ENCODE measurements at regions of chr15 and their contacts with region 1.

Region 1: DNA sequence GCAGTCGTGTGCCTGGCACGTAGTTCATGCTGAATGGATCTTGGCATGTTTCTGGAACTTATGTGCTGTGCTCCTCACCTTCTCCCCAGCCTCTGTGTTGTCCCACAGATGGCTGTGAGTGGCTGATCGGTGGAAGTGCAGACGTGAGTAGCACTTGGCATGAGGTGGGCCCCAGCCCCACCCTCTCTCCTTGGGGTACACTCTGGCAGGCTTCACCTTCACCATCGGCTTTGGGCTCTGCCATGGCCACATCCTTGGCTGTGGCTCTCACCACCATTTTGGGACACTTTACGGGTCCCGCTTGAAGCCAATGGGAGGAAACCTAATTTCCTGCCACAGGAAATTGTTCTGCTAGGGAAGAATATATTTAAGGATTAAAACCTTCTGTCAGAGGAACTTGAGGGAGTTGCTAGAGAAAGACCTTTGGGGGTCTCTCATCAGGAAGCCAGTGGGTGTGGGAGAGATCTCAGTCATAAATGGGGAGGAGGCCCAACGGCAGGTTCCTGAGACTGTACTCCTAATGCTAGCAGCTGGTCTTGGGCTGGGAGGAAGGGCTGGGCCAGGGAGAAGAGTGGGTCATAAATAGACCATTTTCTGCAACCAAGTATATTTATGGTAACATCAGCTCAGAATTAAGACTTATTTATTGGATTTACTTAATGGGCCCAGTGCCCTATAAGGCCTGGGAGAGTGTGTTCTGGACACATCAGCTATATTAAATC is 92.3 kb downstream of the SMAD3 start:
- DNase-seq: peak in 1 of 5 donors; percentile 18
- H3K4me3 ChIP-seq: no peak overlapping the region
- H3K27ac ChIP-seq: no peak overlapping the region
- H3K4me1 ChIP-seq: peaks cover 11% of the 10 kb centered on the region
- H3K27me3 ChIP-seq: no peaks in the 10 kb centered on the region
- CTCF ChIP-seq: no peak
- EP300 ChIP-seq: no peak
- POLR2A ChIP-seq: no peak

Region 2: DNA sequence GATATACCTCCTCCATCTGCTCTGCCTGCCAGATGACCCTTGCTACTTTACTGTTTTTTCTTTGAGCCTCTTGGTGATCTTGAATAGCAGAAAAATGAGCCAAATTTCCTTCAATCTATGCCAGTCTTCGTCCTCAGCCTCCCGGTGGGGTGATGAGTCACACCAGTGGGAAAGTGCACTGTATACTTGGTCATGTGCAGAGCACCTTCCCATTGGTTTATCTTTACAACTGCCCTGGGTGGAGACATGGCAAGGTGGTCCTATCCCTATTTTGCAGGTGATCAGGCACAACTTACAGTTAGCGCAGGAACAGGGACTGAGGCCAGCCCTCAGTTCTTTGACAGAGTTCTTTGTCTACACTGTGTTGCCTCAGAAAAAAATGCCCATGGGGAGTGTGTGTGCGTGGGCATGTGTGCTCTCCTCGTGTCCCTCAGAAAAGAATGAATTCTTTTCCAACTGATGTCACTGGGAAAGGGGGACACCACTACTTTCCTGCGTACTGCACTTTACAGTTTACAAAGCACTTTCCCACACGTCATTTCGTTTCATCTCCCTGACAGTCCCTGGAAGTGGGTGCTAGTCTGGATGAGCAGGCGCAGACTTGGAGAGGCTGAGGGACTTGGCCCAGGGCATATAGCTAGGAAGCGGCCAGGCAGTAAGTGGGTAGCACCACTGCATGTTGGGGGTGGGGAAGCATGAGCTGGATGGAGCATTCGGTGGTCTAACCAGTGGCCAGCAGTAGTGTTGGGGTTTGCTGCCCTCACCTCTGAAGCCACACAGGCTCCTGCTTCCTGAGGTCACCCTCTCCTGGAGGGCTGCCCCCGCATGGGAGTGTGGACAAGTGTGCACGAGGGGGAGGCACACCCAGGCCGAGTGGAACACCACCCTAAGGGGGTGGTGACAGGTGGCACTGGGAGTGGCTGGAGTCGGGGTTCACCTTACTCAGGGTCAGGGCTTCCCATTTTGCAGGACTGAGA is 68.2 kb before region 1 on chr15:
- intact Hi-C with region 1: loop called in 1 of 4 experiments (anchors 2 kb)
- DNase-seq: no peak
- H3K4me3 ChIP-seq: no peak overlapping the region
- H3K27ac ChIP-seq: no peak overlapping the region
- H3K4me1 ChIP-seq: peaks cover 49% of the 10 kb centered on the region
- H3K27me3 ChIP-seq: no peaks in the 10 kb centered on the region
- CTCF ChIP-seq: no peak
- EP300 ChIP-seq: no peak
- POLR2A ChIP-seq: no peak